Activated CD4-positive, alpha-beta memory T cell treated with anti-CD3 and anti-CD28 coated beads, Interleukin-2, amount 10 ng/mL, durations not matched to agents 7 days and 5 days (primary cell): ENCODE measurements at regions of chr7 and their contacts with region 1.

Region 1: DNA sequence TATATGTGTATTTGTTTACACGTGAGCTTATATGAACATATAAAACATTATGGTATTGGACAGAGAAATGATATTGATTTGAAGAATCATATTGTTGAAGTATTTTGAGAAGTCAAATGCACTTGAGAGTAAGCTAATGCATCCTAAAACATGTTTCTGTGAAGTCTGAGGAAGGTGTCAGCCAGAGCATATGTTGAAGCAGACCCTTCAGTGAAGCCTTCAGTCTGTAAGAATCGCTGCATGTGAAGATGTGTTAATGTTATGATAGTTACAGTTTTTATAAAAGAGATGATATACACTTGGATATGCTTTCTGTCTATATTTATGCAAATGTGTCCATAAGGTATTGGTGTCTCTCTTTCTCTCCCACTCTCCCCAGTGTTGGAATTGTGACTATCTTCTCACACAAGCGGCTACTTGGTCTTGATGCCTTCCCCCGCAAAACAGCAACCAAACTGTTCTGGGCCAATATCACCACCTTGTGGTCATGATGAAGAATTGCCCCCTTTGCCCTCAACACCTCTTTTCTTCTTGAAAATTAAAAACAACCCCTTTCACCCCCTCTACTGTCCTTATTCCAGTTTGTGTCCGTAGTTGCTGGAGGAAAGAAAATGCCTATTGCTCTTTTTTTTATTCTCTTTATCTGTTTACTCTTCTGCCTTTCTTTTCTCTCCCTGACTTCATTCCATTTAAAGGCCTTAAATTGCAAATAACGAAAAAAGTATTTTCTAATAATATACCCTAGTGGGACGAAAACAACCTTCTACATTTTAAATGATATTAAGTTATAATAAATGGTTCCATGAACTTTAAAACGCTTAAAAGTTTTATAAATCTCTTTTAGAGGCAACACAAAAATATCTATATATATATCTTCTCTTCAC is 64.9 kb downstream of the IKZF1 start:
- DNase-seq: peak; percentile 56
- H3K4me3 Mint-ChIP-seq: no peak overlapping the region
- H3K27ac Mint-ChIP-seq: peak overlapping the region; percentile 82
- H3K4me1 Mint-ChIP-seq: peaks cover 96% of the 10 kb centered on the region
- H3K27me3 Mint-ChIP-seq: no peaks in the 10 kb centered on the region

Region 2: DNA sequence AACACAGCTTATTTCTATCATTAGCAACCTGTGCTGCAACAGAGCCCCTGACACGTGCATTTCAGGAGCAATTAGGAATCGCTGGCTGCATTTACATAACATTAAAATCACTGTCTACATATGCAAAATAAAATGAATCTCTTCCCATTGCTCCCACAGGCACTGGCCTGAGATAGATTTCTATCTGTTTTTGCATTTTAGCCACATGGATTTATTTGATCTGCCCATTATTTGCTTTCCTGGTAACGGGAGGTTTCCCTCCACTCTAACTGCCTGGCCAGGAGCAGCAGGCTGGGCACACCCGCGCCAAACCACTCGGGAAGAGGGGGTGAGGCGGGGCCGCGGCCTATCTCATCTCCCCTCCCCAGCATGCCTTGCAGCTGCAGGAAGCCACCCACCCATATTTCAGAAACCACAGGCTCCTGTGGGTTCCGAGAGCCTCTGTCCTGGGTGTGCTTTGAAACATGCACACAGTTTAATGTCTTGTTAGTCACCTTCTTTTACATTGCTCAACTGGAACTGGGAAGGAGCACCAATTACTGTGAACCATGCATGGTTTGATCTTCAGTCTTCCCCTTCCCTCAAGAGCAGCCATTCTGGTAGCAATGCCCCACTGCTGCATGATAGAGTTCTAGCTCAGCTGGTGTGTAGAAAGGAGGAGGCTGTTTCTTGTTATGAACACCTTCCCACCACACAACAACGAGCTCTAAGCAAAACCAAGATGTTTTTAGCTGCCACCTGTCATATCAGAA is 102.6 kb before region 1 on chr7:
- CTCF ChIA-PET with region 1: interaction called, 7 read pairs
- POLR2A ChIA-PET with region 1: interaction called, 26 read pairs
- DNase-seq: peak; percentile 88
- H3K4me3 Mint-ChIP-seq: peak overlapping the region; percentile 62
- H3K27ac Mint-ChIP-seq: peak overlapping the region; percentile 98
- H3K4me1 Mint-ChIP-seq: peaks cover 92% of the 10 kb centered on the region
- H3K27me3 Mint-ChIP-seq: no peaks in the 10 kb centered on the region

Region 3: DNA sequence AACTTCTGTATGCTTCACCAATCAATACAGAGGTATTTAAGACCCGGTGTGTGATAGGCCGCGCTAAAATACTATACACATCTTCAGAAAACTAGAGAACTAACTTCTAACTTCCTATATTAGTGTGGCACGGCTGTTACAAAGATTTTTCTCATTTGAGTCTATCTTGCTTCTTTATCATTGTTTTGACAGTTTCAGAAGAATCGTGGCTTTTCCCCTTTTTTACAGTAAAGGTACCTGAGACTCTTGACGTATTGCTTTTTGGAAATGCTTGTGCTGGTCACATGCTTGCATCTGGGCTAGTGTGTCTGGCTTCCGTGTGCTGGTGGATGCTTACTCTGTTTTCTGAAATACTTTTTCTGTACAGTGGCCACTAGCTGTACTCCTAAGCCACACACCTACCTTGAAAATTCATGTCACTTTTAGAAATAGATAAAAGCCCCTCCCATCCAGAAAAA is 52.1 kb before region 1 on chr7:
- CTCF ChIA-PET with region 1: interaction called, 177 read pairs
- POLR2A ChIA-PET with region 1: interaction called, 566 read pairs
- DNase-seq: peak; percentile 64
- H3K4me3 Mint-ChIP-seq: peak overlapping the region; percentile 68
- H3K27ac Mint-ChIP-seq: peak overlapping the region; percentile 99
- H3K4me1 Mint-ChIP-seq: peaks cover 93% of the 10 kb centered on the region
- H3K27me3 Mint-ChIP-seq: no peaks in the 10 kb centered on the region

Region 4: GRCh38 chr7:50349963-50350944 is 19.1 kb before region 1 on chr7:
- CTCF ChIA-PET with region 1: interaction called, 9 read pairs
- POLR2A ChIA-PET with region 1: interaction called, 470 read pairs
- DNase-seq: peak; percentile 87
- H3K4me3 Mint-ChIP-seq: peak overlapping the region; percentile 62
- H3K27ac Mint-ChIP-seq: peak overlapping the region; percentile 92
- H3K4me1 Mint-ChIP-seq: peaks cover 97% of the 10 kb centered on the region
- H3K27me3 Mint-ChIP-seq: no peaks in the 10 kb centered on the region

Region 5: GRCh38 chr7:50418086-50418515 is 48.7 kb after region 1 on chr7:
- CTCF ChIA-PET with region 1: interaction called, 11 read pairs
- POLR2A ChIA-PET with region 1: interaction called, 3 read pairs
- DNase-seq: peak; percentile 81
- H3K4me3 Mint-ChIP-seq: no peak overlapping the region
- H3K27ac Mint-ChIP-seq: no peak overlapping the region
- H3K4me1 Mint-ChIP-seq: peaks cover 23% of the 10 kb centered on the region
- H3K27me3 Mint-ChIP-seq: no peaks in the 10 kb centered on the region

Region 6: GRCh38 chr7:50467817-50468610 is 98.6 kb after region 1 on chr7:
- CTCF ChIA-PET with region 1: no interaction called
- POLR2A ChIA-PET with region 1: no interaction called
- DNase-seq: peak; percentile 85
- H3K4me3 Mint-ChIP-seq: no peak overlapping the region
- H3K27ac Mint-ChIP-seq: no peak overlapping the region
- H3K4me1 Mint-ChIP-seq: peaks cover 13% of the 10 kb centered on the region
- H3K27me3 Mint-ChIP-seq: peaks cover 1% of the 10 kb centered on the region